ENCODE measurements at regions of chr5 and their contacts with region 1.

Region 1: DNA sequence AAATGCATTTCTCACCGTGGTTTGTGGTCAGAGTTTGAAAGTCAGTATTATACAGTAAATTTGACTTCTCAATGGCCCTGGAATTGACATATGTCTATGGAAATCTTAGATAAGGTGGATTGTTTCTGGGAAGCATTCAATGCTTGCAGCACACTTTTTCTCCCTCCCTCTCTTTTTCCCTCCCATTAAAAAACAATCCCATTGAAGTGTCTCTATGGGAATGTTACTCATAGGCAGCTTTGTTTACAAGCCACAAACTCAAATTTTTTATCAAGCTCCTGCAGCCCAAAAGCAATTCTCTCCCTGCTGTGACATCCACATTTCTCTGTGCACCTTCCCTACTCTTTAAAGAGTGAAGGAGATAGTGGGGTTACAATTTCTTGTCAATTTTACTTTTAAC is 292.1 kb downstream of the ARRDC3 start:
- DNase-seq: no peak
- H3K4me3 ChIP-seq: no peak overlapping the region
- H3K27ac ChIP-seq: no peak overlapping the region
- H3K4me1 ChIP-seq: peaks cover 0 to 5% (median 0%) of the 10 kb centered on the region in 4 donors
- H3K27me3 ChIP-seq: no peaks in the 10 kb centered on the region
- CTCF ChIP-seq: no peak

Region 2: DNA sequence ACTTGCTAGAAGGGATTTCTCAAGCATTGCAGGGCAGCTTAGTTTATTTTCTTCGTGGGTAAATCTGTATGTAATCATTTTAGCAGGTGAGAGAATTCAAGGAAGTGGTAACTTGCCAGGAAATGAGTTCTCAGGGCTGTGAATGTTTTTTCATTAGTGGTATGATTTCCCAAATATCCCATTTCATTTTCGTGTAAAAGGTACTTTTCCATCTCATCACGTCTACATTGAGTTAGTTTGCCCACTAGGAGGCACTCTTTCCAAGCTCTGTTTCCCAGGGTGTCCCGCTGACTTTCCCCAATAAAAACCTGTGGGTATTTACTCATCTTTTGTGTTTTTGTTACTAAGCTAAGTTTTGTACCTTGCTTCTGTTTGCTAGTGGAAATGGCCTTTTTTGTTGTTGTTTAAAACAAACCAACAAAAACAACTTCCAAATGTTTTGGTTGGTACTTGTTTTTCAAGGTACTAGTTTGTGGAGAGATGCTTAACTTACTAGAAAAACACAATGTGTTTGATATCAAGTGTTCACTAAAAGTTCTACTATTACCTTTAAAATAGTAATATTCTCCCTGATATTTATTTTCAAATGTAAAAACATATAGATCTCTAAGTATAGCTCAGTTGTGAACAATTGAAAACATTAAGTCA is 158.8 kb before region 1 on chr5:
- intact Hi-C with region 1: loop called (anchors 5 kb)
- DNase-seq: peak in 1 of 2 donors; percentile 22
- H3K4me3 ChIP-seq: no peak overlapping the region
- H3K27ac ChIP-seq: no peak overlapping the region
- H3K4me1 ChIP-seq: peaks cover 0 to 9% (median 3%) of the 10 kb centered on the region in 4 donors
- H3K27me3 ChIP-seq: no peaks in the 10 kb centered on the region
- CTCF ChIP-seq: peak; percentile 73 to 76